Ovary (tissue), 10 donors: ENCODE measurements at regions of chr21 and their contacts with region 1.

Region 1: GRCh38 chr21:33441489-33442477 is 38.0 kb downstream of the TMEM50B start:
- DNase-seq: peak in 1 of 5 donors; percentile 13
- H3K4me3 ChIP-seq: no peak overlapping the region
- H3K27ac ChIP-seq: no peak overlapping the region
- H3K4me1 ChIP-seq: peaks cover 3% of the 10 kb centered on the region
- H3K27me3 ChIP-seq: no peaks in the 10 kb centered on the region
- CTCF ChIP-seq: no peak
- EP300 ChIP-seq: no peak
- POLR2A ChIP-seq: no peak

Region 2: DNA sequence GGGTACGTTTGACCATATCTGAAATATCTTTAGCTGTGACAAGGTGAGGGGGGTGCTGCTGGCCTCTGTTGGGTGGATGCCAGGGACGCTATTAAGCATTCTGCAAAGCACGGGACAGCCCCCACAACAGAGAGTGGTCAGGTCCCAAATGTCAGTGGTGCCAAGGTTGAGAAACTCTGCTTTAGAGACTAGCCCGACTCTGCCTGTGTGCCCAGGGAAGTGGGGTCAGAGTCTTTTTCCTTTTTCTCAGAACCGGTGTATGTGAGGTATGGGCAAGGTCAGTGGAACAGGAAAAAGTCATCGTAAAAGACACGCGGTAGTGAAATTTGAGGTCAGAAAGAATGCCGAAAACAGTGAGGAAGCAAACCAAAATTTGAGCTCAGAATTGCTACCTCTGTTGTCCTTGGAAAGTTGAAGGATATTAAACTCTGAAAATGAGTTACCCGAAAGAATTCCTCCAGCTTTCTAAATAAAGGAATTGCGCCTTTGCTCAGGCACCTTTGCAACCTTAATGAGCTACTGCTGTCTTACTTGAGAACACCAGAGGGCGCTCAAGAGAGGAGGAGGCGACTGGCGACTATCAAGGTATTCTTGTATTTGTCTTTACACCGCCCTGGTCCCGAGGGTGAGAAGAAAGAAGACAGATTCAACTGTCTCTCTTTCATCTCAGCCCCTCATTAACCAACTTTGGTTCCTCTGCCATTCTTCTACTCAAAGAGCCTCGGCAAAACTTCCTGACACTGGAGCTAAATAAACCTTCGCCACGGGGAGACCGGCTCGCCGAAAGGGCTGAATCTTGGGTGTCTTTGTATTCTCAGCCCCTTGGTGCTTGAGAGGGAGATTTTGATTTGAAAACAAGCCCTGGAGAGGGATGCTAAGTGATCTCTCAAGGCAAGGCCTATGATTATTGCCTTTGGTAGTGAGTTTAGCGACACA is 501.4 kb before region 1 on chr21:
- intact Hi-C with region 1: loop called in 1 of 4 experiments (anchors 10 kb)
- DNase-seq: peak in 1 of 5 donors; percentile 30
- H3K4me3 ChIP-seq: no peak overlapping the region
- H3K27ac ChIP-seq: no peak overlapping the region
- H3K4me1 ChIP-seq: no peaks in the 10 kb centered on the region
- H3K27me3 ChIP-seq: no peaks in the 10 kb centered on the region
- CTCF ChIP-seq: peak in 1 of 3 donors; percentile 16
- EP300 ChIP-seq: no peak
- POLR2A ChIP-seq: no peak

Region 3: DNA sequence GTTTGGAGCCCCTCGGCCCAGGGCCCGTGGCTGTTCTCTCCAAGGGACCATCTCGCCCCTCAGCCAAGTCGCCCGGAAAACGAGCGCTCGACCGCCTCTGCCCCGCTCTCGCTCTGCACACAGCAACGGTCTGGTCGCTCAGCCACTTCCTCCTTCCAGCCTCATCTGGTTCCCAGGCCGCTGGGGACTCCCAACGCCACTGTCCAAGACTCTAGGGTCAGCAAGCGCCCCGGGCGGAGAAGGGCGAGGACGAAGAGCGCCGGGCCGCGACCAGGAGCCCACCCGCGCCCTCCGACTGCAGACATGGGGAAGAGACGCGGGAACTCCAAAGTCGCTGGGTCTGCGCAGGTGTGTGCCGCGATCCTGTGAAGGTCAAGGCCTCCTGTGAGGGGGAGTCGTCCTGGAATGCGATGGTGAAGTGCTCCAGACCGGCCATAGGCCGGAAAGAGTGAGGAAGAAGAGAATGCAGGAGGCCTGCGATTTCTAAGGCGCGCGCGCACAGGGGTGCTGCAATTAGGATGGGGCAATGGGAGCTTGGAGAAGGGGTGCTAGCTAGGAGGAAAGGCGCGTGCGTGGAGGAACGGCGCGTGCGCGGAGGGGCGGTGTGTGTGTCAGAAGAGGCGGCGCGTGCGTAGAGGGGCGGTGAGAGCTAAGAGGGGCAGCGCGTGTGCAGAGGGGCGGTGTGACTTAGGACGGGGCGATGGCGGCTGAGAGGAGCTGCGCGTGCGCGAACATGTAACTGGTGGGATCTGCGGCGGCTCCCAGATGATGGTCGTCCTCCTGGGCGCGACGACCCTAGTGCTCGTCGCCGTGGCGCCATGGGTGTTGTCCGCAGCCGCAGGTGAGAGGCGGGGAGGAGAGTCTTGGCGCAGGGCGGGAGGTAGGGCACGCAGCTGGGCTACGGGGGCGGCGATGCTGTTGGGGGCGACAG is 117.2 kb before region 1 on chr21 and contains the start of gene IFNAR1:
- intact Hi-C with region 1: loop called in 1 of 4 experiments (anchors 10 kb)
- DNase-seq: peak; percentile 97 to 100 (median 99)
- H3K4me3 ChIP-seq: peak within 1 kb of the TSS; percentile 88
- H3K27ac ChIP-seq: peak within 1 kb of the TSS; percentile 93 to 95
- H3K4me1 ChIP-seq: peaks cover 8% of the 10 kb centered on the region
- H3K27me3 ChIP-seq: no peaks in the 10 kb centered on the region
- CTCF ChIP-seq: no peak
- EP300 ChIP-seq: no peak
- POLR2A ChIP-seq: peak; percentile 73
- total RNA-seq, gene IFNAR1: 20.6 to 47.9 (median 35.1) TPM